HepG2 (cell line): ENCODE measurements at regions of chrX and their contacts with region 1.

Region 1: GRCh38 chrX:123833387-123833786 is 26.5 kb upstream of the XIAP start:
- DNase-seq: peak; percentile 60
- ATAC-seq: peak; percentile 86
- H3K4me3 ChIP-seq: no peak overlapping the region
- H3K27ac ChIP-seq: no peak overlapping the region
- H3K4me1 ChIP-seq: peaks cover 56% of the 10 kb centered on the region
- H3K27me3 ChIP-seq: no peaks in the 10 kb centered on the region
- CTCF ChIP-seq: peak; percentile 83
- EP300 ChIP-seq: 0 out of 4 replicates have a peak, but pooled peaks of 1 of the 2 experiments have one; percentile 9
- POLR2A ChIP-seq: no peak
- RAD21 ChIP-seq: peak; percentile 74

Region 2: DNA sequence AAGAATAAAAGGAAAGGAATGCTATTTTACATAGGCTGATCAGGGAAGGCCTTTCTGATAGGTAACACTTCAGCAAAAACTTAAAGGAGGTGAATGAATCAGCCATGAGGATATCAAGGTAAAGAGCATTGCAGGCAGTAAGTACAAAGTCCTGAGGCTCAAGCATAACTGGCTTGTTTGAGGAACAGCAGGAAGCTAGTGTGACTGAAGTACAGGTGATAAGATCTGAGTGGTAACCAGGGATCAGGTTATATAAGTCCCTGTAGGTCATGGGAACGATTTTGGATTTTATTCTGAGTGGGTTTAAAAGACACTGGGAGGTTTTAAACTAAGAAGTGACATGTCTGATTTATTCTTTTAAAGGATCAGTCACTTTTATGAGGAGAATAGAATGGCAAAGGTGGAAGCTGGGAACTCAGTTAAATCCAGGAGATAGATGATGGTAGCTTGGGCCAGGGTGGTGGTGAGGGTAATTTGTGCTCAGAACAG is 53.4 kb before region 1 on chrX:
- CTCF ChIA-PET with region 1: no interaction called
- POLR2A ChIA-PET with region 1: interaction called, 5 read pairs
- in situ Hi-C with region 1: no loop called
- intact Hi-C with region 1: loop called (anchors 2 kb)
- DNase-seq: peak; percentile 83
- ATAC-seq: peak; percentile 65
- H3K4me3 ChIP-seq: peak overlapping the region in 2 of 3 experiments; percentile 9 to 58; a peak in 1 of 6 replicates
- H3K27ac ChIP-seq: peak overlapping the region; percentile 93
- H3K4me1 ChIP-seq: peaks cover 39% of the 10 kb centered on the region
- H3K27me3 ChIP-seq: no peaks in the 10 kb centered on the region
- CTCF ChIP-seq: no peak
- EP300 ChIP-seq: peak in 1 of 2 experiments; percentile 83; a peak in 2 of 4 replicates
- POLR2A ChIP-seq: no peak
- RAD21 ChIP-seq: no peak

Region 3: GRCh38 chrX:123884809-123885408 is 51.5 kb after region 1 on chrX:
- CTCF ChIA-PET with region 1: interaction called, 3 read pairs
- POLR2A ChIA-PET with region 1: no interaction called
- in situ Hi-C with region 1: no loop called
- intact Hi-C with region 1: loop called (anchors 1 kb)
- DNase-seq: peak; percentile 31
- ATAC-seq: no peak
- H3K4me3 ChIP-seq: no peak overlapping the region
- H3K27ac ChIP-seq: no peak overlapping the region
- H3K4me1 ChIP-seq: peaks cover 7% of the 10 kb centered on the region
- H3K27me3 ChIP-seq: no peaks in the 10 kb centered on the region
- CTCF ChIP-seq: peak; percentile 33; the same call in 1 of the 2 replicates
- EP300 ChIP-seq: no peak
- POLR2A ChIP-seq: no peak
- RAD21 ChIP-seq: no peak

Region 4: DNA sequence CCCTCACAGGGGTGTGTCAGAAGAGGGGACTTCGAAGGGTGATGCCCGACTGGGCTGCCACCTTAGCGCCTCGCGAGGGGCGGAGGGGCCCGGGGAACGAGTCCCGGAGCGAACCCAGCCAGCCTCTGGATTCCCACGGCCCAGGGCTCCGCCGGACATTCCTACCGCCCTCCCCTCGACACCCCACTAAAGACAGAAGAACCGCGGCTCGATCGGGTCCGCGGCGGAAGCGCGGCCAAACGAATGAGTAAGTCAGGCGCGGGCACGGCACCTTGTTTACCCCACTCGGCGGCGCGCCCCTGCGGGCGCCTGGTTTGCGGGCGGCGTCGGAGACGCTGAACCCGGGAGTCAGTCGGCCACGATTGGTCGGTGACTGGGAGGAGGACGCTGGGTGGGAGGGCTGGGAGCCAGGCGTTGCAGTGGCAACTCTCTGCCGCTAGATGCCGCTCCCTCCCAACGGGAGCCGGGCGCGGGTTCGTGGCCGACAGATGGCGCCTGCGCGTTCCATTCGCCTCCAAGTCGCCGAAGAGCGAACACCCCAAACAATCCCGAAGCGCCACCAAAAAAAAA is 126.7 kb after region 1 on chrX:
- CTCF ChIA-PET with region 1: interaction called, 3 read pairs
- POLR2A ChIA-PET with region 1: interaction called, 3 read pairs
- in situ Hi-C with region 1: no loop called
- intact Hi-C with region 1: loop called (anchors 2 kb)
- DNase-seq: peak; percentile 78
- ATAC-seq: peak; percentile 86
- H3K4me3 ChIP-seq: peak overlapping the region; percentile 76 to 83 (median 78); a peak in 5 of 6 replicates
- H3K27ac ChIP-seq: peak overlapping the region; percentile 99
- H3K4me1 ChIP-seq: peaks cover 10% of the 10 kb centered on the region
- H3K27me3 ChIP-seq: no peaks in the 10 kb centered on the region; a peak in 1 of 5 replicates
- CTCF ChIP-seq: peak; percentile 86
- EP300 ChIP-seq: no peak
- POLR2A ChIP-seq: peak; percentile 64 to 68
- RAD21 ChIP-seq: peak; percentile 87

Region 5: GRCh38 chrX:123976706-123977316 is 143.4 kb after region 1 on chrX:
- CTCF ChIA-PET with region 1: interaction called, 4 read pairs
- POLR2A ChIA-PET with region 1: no interaction called
- in situ Hi-C with region 1: loop called (anchors 10 kb)
- intact Hi-C with region 1: no loop called
- DNase-seq: peak; percentile 31
- ATAC-seq: peak; percentile 51; the same call in 2 of the 3 replicates
- H3K4me3 ChIP-seq: no peak overlapping the region
- H3K27ac ChIP-seq: no peak overlapping the region
- H3K4me1 ChIP-seq: no peaks in the 10 kb centered on the region
- H3K27me3 ChIP-seq: no peaks in the 10 kb centered on the region
- CTCF ChIP-seq: peak; percentile 35; the same call in 1 of the 2 replicates
- EP300 ChIP-seq: no peak
- POLR2A ChIP-seq: no peak
- RAD21 ChIP-seq: peak; percentile 39; the same call in 1 of the 2 replicates